Activated T-helper 2 cell treated with anti-CD3 and anti-CD28 coated beads, Interferon-gamma antibody, Interleukin-2, Interleukin-4, amounts not matched to agents 10 μg/mL and 5 μg/mL and 100 μg/mL, durations not matched to agents 14 hours and 24 hours and 36 hours (primary cell): ENCODE measurements at regions of chr12 and their contacts with region 1.

Region 1: GRCh38 chr12:124480469-124481256 is 86.7 kb downstream of the NCOR2 start:
- DNase-seq: peak; percentile 59
- H3K4me3 Mint-ChIP-seq: peak overlapping the region; percentile 5
- H3K27ac Mint-ChIP-seq: no peak overlapping the region
- H3K4me1 Mint-ChIP-seq: peaks cover 24% of the 10 kb centered on the region
- H3K27me3 Mint-ChIP-seq: no peaks in the 10 kb centered on the region

Region 2: GRCh38 chr12:124369055-124369900 is 111.4 kb before region 1 on chr12:
- intact Hi-C with region 1: no loop called
- DNase-seq: no peak
- H3K4me3 Mint-ChIP-seq: no peak overlapping the region
- H3K27ac Mint-ChIP-seq: no peak overlapping the region
- H3K4me1 Mint-ChIP-seq: no peaks in the 10 kb centered on the region
- H3K27me3 Mint-ChIP-seq: no peaks in the 10 kb centered on the region

Region 3: GRCh38 chr12:124466216-124467128 is 14.2 kb before region 1 on chr12:
- intact Hi-C with region 1: loop called (anchors 2 kb)
- DNase-seq: peak; percentile 83
- H3K4me3 Mint-ChIP-seq: peak overlapping the region; percentile 60
- H3K27ac Mint-ChIP-seq: peak overlapping the region; percentile 74
- H3K4me1 Mint-ChIP-seq: peaks cover 36% of the 10 kb centered on the region
- H3K27me3 Mint-ChIP-seq: no peaks in the 10 kb centered on the region

Region 4: DNA sequence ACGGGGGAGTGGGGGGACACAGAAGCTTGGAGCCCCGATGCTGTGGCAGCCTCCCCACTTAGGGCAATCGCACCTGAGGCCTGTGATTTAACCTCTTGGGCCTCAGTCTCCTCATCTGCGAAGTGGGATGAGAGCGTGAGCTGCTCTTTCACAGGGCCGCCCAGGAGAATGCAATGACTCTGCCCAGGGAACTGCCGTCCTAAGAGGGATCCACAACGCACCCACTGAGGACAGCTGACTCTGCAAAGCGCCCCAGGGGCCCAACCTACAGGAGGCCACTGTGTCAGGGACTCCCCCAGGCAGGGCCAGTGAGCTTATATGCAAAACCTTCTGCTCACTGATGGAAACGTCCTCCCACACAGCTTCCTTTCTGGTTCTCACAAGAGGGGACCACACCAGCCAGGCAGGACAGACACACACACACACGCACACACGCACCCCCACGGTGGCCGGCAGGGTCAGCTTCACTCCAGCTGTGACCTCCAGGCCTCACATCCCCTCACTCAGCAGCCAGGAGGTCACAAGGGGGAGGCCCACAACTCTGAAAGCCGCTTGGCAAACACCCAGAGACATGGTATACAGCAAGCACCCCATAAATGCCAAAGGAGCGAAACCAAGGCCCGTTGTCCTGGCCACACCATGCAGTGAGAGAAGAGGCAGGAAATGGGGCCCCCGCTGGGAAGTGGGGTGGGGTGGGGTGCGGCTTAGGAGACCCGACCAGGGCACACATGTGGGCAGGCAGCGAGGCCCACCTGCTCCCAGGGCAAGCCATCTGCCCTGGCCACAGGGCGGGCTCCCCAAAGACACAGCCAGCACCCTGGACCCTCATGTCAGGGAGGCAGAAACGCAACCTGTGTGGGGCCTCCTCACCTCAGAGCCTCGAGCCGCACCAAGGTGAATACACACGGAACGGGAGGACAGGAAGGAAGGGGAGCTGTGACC is 13.4 kb after region 1 on chr12:
- intact Hi-C with region 1: loop called (anchors 2 kb)
- DNase-seq: no peak
- H3K4me3 Mint-ChIP-seq: no peak overlapping the region
- H3K27ac Mint-ChIP-seq: peak overlapping the region; percentile 65
- H3K4me1 Mint-ChIP-seq: peaks cover 23% of the 10 kb centered on the region
- H3K27me3 Mint-ChIP-seq: no peaks in the 10 kb centered on the region